ENCODE measurements at regions of chr16 and their contacts with region 1.

Region 1: DNA sequence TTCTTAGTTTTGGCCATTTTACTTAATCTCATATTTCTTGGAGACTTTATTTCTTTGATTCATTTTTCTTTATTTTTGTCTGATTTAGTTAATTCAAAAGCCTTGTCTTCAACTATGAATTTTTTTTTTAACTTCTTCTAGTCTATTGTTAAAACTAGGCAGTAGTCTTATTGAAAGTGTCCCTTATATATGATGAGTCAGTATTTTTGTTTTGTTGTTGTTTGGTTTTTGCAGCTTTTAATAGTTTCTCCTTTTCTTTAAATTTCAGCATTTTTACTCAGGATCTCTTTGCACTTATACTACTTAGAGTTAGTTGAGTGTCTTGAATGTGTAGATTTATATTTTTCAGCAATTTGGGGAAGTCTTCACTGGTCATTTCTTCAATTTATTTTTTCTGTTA is 758.5 kb upstream of the CDH8 start:
- DNase-seq: no peak
- ATAC-seq: no peak
- H3K4me3 ChIP-seq: no peak overlapping the region
- H3K27ac ChIP-seq: no peak overlapping the region
- H3K4me1 ChIP-seq: no peaks in the 10 kb centered on the region
- H3K27me3 ChIP-seq: no peaks in the 10 kb centered on the region
- CTCF ChIP-seq: no peak
- POLR2A ChIP-seq: no peak
- RAD21 ChIP-seq: no peak

Region 2: GRCh38 chr16:63018581-63019223 is 224.0 kb after region 1 on chr16:
- CTCF ChIA-PET with region 1: no interaction called
- POLR2A ChIA-PET with region 1: no interaction called
- dilution Hi-C with region 1: no loop called
- in situ Hi-C with region 1: no loop called
- intact Hi-C with region 1: no loop called
- DNase-seq: no peak
- ATAC-seq: no peak
- H3K4me3 ChIP-seq: no peak overlapping the region
- H3K27ac ChIP-seq: no peak overlapping the region
- H3K4me1 ChIP-seq: no peaks in the 10 kb centered on the region
- H3K27me3 ChIP-seq: no peaks in the 10 kb centered on the region
- CTCF ChIP-seq: no peak
- POLR2A ChIP-seq: no peak
- RAD21 ChIP-seq: no peak

Region 3: GRCh38 chr16:64297863-64298600 is 1503.3 kb after region 1 on chr16:
- CTCF ChIA-PET with region 1: no interaction called
- POLR2A ChIA-PET with region 1: no interaction called
- dilution Hi-C with region 1: no loop called
- in situ Hi-C with region 1: no loop called
- intact Hi-C with region 1: loop called (anchors 5 kb)
- DNase-seq: no peak
- ATAC-seq: no peak
- H3K4me3 ChIP-seq: no peak overlapping the region
- H3K27ac ChIP-seq: no peak overlapping the region
- H3K4me1 ChIP-seq: no peaks in the 10 kb centered on the region
- H3K27me3 ChIP-seq: peaks cover 2% of the 10 kb centered on the region; the same call in 1 of the 2 replicates
- CTCF ChIP-seq: no peak
- POLR2A ChIP-seq: no peak
- RAD21 ChIP-seq: no peak